Activated CD4-positive, alpha-beta memory T cell treated with anti-CD3 and anti-CD28 coated beads for 36 hours (primary cell): ENCODE measurements at regions of chr16 and their contacts with region 1.

Region 1: DNA sequence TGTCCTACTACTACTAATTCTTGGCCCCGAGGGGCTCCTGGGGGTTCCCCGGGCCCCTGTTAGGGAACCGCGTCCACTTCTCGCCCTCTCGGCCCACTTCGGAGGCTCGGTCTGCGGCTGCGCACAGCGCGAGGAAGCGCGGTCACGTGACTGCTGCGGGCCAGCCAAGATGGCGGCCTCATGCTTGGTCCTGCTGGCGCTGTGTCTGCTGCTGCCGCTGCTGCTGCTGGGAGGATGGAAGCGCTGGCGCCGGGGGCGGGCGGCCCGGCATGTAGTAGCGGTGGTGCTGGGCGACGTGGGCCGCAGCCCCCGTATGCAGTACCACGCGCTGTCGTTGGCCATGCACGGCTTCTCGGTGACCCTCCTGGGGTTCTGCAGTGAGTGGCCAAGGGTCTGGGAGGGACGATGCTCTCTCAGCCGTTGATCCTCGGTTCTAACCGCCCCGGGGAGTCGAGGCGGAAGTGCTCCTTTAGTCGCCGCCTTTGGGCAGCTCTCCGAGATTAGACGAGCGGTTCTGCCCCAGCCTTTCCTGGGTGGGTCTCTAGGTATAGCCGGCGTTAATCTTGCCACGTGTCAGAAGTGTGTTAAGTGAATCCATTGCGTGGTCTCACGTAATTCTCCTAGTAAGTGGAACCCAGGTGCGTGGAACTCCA is at the start of gene ALG1:
- DNase-seq: peak; percentile 93
- H3K4me3 Mint-ChIP-seq: peak within 1 kb of the TSS; percentile 95
- H3K27ac Mint-ChIP-seq: peak within 1 kb of the TSS; percentile 86
- H3K4me1 Mint-ChIP-seq: peaks cover 20% of the 10 kb centered on the region
- H3K27me3 Mint-ChIP-seq: no peaks in the 10 kb centered on the region
- total RNA-seq, gene ALG1: 12.8 to 14.1 TPM

Region 2: GRCh38 chr16:5033256-5034169 is 38.3 kb before region 1 on chr16 and contains the start of gene NAGPA:
- CTCF ChIA-PET with region 1: no interaction called
- POLR2A ChIA-PET with region 1: interaction called, 3 read pairs
- intact Hi-C with region 1: loop called (anchors 5 kb)
- DNase-seq: peak; percentile 89
- H3K4me3 Mint-ChIP-seq: peak within 1 kb of the TSS; percentile 84
- H3K27ac Mint-ChIP-seq: peak within 1 kb of the TSS; percentile 79
- H3K4me1 Mint-ChIP-seq: peaks cover 20% of the 10 kb centered on the region
- H3K27me3 Mint-ChIP-seq: no peaks in the 10 kb centered on the region
- total RNA-seq, gene NAGPA: 7.6 to 7.8 TPM

Region 3: GRCh38 chr16:5206331-5206990 is 134.7 kb after region 1 on chr16:
- CTCF ChIA-PET with region 1: no interaction called
- POLR2A ChIA-PET with region 1: no interaction called
- intact Hi-C with region 1: no loop called
- DNase-seq: no peak
- H3K4me3 Mint-ChIP-seq: no peak overlapping the region
- H3K27ac Mint-ChIP-seq: no peak overlapping the region
- H3K4me1 Mint-ChIP-seq: no peaks in the 10 kb centered on the region
- H3K27me3 Mint-ChIP-seq: no peaks in the 10 kb centered on the region